ENCODE measurements at regions of chr11 and their contacts with region 1.

Region 1: DNA sequence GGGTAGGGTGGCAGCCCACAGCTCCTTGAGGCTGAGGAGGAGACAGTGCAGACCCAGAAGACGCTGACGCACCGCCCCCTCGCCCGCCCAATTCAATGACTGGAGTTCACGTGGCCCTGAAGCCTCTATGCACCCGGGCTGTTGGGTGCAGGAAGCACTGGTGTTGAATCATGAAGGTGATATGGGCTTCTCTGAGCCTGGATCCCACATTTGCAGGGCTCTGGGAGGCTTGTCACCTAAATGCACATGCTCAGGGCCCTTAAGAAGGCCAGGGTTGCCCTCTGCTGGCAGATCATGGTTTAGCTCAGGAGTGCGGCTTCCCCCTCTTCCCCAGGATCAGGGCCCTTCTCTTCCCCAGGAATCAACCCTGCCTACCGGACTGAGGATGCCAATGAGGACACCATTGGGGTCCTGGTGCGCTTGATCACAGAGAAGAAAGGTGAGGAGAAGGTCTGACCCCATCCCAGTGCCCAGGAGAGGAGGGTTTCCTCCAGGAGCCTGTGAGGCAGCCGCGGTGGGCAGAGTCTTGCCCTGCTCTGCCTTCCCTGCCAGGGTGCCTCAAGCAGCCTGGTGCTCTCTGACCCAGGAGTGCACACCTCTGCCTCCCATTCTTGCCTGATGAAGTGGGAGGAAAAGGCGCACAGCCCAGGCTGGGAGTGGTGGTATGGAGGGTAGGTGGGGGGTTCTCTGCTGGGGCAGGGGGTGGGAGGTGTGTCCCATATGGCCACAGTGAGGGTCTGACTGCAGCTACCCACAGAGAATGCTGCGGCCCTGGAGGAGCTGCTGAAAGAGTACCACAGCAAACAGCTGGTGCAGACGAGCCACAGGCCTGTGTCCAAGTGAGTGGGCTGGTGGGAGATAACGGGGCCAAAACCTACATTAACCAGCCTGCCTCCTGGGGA is 17.5 kb downstream of the RELT start:
- DNase-seq: peak; percentile 65
- H3K4me3 ChIP-seq: no peak overlapping the region
- H3K27ac ChIP-seq: no peak overlapping the region
- H3K4me1 ChIP-seq: no peaks in the 10 kb centered on the region
- H3K27me3 ChIP-seq: no peaks in the 10 kb centered on the region
- CTCF ChIP-seq: peak; percentile 31 to 89 (median 73)
- POLR2A ChIP-seq: no peak

Region 2: GRCh38 chr11:73307323-73308002 is 86.3 kb before region 1 on chr11:
- intact Hi-C with region 1: loop called (anchors 5 kb)
- DNase-seq: peak; percentile 99
- H3K4me3 ChIP-seq: peak overlapping the region; percentile 67 to 76
- H3K27ac ChIP-seq: peak overlapping the region; percentile 97
- H3K4me1 ChIP-seq: peaks cover 6% of the 10 kb centered on the region
- H3K27me3 ChIP-seq: no peaks in the 10 kb centered on the region
- CTCF ChIP-seq: peak; percentile 79 to 97 (median 96)
- POLR2A ChIP-seq: peak; percentile 63

Region 3: DNA sequence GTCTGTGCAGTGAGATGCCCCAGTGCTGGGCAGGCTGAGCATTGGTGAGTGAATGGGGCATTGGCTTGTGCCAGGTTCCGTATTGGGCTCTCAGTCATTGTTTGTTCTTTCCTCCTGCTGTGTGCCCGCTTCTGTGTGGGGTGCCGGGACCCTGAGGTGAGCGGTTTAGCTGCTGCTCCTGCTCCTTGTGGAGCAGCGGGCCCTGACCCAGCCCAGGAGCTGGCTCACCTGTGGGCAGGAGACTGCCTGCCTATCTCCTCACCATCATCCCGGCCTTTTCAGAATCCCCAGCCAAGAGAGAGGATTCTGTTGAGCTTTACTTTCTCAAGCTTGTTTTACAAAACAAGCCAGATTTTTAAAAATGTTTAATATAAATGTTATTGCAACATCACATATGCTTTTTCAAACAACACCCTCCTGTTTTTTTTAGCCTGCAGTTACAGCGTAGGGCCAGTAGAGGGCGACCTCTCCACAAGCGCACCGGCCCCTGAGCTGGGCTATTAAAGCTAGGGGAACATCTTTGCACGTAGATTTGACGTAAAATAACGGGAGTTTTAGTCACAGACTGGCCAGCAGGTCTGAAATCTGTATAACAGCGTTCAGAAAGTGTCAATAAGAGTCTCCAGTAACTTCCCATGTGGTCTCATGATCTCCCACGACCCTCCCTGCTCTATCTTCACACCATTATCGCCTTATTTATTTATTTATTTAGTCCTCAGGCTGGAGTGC is 42.7 kb before region 1 on chr11:
- intact Hi-C with region 1: loop called (anchors 5 kb)
- DNase-seq: no peak
- H3K4me3 ChIP-seq: no peak overlapping the region
- H3K27ac ChIP-seq: no peak overlapping the region
- H3K4me1 ChIP-seq: no peaks in the 10 kb centered on the region
- H3K27me3 ChIP-seq: no peaks in the 10 kb centered on the region
- CTCF ChIP-seq: peak; percentile 92 to 96 (median 94)
- POLR2A ChIP-seq: no peak